Activated CD8-positive, alpha-beta memory T cell treated with anti-CD3 and anti-CD28 coated beads, Interleukin-2, amount 10 ng/mL, durations not matched to agents 7 days and 5 days (primary cell): ENCODE measurements at regions of chr12 and their contacts with region 1.

Region 1: GRCh38 chr12:751192-751998 is 984 bp upstream of the WNK1 start:
- DNase-seq: peak; percentile 97
- ATAC-seq: peak; percentile 61
- H3K4me3 Mint-ChIP-seq: no peak overlapping the region
- H3K27ac Mint-ChIP-seq: no peak overlapping the region
- H3K4me1 Mint-ChIP-seq: peaks cover 18% of the 10 kb centered on the region
- H3K27me3 Mint-ChIP-seq: no peaks in the 10 kb centered on the region

Region 2: GRCh38 chr12:575948-576612 is 175.3 kb before region 1 on chr12:
- CTCF ChIA-PET with region 1: interaction called, 99 read pairs
- DNase-seq: peak; percentile 85
- ATAC-seq: peak; percentile 94
- H3K4me3 Mint-ChIP-seq: no peak overlapping the region
- H3K27ac Mint-ChIP-seq: peak overlapping the region; percentile 70
- H3K4me1 Mint-ChIP-seq: peaks cover 43% of the 10 kb centered on the region
- H3K27me3 Mint-ChIP-seq: no peaks in the 10 kb centered on the region

Region 3: DNA sequence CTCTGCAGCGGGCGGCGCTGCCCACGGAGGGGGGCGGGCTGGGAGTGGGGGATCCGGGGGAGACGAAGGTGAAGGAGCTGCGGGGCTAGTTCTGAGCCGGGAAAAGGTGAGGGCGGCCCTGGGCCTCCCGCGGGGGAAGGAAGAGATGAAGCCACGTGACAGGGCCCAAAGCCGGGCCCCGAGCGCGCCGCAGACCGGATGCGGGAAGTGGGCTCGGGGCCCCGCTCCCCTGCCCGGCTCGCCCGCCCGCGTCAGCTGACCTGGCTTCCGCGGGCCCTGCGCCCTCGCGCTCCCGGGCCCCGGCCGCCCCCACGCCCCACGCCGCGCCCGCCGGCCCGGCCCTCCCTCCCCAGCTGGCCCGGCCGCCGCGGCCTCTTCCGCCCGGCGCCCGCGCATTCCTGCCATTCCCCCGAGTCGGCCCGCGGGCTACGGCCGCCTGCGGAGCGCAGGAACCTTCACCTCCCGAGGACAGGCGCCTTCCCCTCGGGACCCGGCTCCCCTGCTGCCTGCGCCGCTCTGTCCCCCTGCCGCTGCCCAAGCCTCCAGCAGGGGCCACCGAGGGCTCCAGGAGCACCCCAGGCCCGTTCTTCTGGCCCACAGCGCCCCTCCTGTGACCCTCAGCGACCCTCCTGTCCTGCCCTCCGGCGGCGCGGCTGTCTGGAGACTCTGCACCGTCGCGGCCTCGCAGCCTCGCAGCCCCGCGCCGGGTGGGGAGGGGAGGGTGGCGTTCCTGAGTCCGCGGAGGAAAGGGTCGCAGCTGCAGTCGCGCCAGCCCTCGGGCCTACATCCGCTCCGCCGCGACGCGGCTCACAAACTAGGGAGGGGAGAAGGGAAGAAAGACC is 108.5 kb before region 1 on chr12:
- CTCF ChIA-PET with region 1: interaction called, 44 read pairs
- DNase-seq: peak; percentile 86
- ATAC-seq: peak; percentile 85
- H3K4me3 Mint-ChIP-seq: peak overlapping the region; percentile 84
- H3K27ac Mint-ChIP-seq: peak overlapping the region; percentile 89
- H3K4me1 Mint-ChIP-seq: peaks cover 58% of the 10 kb centered on the region
- H3K27me3 Mint-ChIP-seq: no peaks in the 10 kb centered on the region

Region 4: GRCh38 chr12:674272-674781 is 77.1 kb before region 1 on chr12:
- CTCF ChIA-PET with region 1: interaction called, 61 read pairs
- DNase-seq: peak; percentile 90
- ATAC-seq: peak; percentile 92
- H3K4me3 Mint-ChIP-seq: peak overlapping the region; percentile 55
- H3K27ac Mint-ChIP-seq: peak overlapping the region; percentile 98
- H3K4me1 Mint-ChIP-seq: peaks cover 74% of the 10 kb centered on the region
- H3K27me3 Mint-ChIP-seq: no peaks in the 10 kb centered on the region

Region 5: GRCh38 chr12:724194-724855 is 27.1 kb before region 1 on chr12:
- CTCF ChIA-PET with region 1: interaction called, 30 read pairs
- DNase-seq: no peak
- ATAC-seq: peak; percentile 86
- H3K4me3 Mint-ChIP-seq: no peak overlapping the region
- H3K27ac Mint-ChIP-seq: peak overlapping the region; percentile 75
- H3K4me1 Mint-ChIP-seq: peaks cover 54% of the 10 kb centered on the region
- H3K27me3 Mint-ChIP-seq: no peaks in the 10 kb centered on the region

Region 6: DNA sequence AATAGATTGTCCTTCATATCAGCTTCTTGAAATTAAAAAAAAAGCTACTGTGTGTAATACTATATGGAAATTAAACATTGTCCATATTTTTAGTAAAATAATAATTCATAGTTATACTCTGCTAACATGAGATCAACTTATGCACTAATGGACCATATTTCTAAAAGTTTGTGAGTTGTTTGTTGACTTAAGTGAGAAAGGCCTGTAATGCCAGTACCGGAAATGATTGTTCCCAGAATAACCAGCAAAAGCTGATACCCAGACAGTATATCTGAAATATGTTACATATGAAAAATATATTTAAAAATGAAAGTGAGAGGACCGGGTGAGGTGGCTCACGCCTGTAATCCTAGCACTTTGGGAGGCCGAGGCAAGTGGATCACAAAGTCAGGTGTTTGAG is 36.9 kb after region 1 on chr12:
- CTCF ChIA-PET with region 1: no interaction called
- DNase-seq: no peak
- ATAC-seq: no peak
- H3K4me3 Mint-ChIP-seq: no peak overlapping the region
- H3K27ac Mint-ChIP-seq: no peak overlapping the region
- H3K4me1 Mint-ChIP-seq: peaks cover 50% of the 10 kb centered on the region
- H3K27me3 Mint-ChIP-seq: no peaks in the 10 kb centered on the region

Region 7: GRCh38 chr12:851913-852312 is 100.5 kb after region 1 on chr12:
- CTCF ChIA-PET with region 1: no interaction called
- DNase-seq: no peak
- ATAC-seq: no peak
- H3K4me3 Mint-ChIP-seq: no peak overlapping the region
- H3K27ac Mint-ChIP-seq: no peak overlapping the region
- H3K4me1 Mint-ChIP-seq: peaks cover 23% of the 10 kb centered on the region
- H3K27me3 Mint-ChIP-seq: no peaks in the 10 kb centered on the region

Region 8: DNA sequence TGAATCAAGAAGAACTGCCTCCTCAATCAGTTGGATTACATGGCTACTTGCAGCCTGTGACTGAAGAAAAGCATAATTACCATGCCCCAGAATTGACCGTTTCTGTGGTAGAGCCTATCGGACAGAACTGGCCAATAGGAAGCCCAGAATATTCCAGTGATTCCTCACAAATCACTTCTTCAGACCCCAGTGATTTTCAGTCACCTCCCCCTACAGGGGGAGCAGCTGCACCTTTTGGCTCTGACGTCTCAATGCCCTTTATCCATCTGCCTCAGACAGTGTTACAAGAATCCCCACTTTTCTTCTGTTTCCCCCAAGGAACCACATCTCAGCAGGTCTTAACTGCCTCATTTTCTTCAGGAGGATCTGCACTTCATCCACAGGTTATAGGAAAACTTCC is 117.3 kb after region 1 on chr12:
- CTCF ChIA-PET with region 1: no interaction called
- DNase-seq: no peak
- ATAC-seq: no peak
- H3K4me3 Mint-ChIP-seq: no peak overlapping the region
- H3K27ac Mint-ChIP-seq: no peak overlapping the region
- H3K4me1 Mint-ChIP-seq: peaks cover 6% of the 10 kb centered on the region
- H3K27me3 Mint-ChIP-seq: no peaks in the 10 kb centered on the region

Region 9: DNA sequence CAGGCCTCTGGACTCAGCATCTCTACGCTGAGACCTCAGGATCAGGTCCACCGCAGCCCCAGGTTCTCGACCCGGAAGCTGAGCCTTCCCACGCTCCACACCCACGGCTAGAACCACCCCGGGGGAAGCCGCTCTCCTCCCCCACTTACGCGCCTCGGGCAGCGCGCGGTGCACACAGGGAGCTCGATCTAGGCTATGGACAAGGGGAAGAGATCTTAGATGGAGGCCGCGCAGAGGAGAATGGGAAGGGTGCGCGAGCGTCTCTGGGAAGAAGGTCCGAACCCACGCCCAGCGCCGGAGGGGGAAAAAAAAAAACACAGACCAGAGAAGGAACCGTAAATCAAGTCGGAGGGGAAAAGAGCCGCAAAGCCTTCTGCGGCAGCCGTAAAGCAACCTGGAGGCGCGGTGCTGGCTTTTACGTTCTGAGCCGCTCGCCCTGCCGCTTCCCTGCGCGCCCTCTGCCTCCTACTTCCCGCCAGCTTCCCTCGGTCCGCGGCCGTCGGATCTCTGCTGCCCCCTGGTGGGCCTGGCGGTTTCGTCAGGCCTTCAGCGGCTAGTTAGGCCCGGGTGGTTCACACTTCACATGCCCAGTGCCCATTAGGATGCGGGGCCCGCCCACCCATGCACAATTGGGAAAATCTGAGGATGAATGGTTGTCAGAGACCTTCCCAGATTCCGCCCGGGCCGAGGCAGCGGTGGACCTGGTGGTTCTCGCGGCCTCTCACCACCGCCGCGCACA is 198.2 kb after region 1 on chr12 and contains the start of gene RAD52:
- CTCF ChIA-PET with region 1: interaction called, 10 read pairs
- DNase-seq: peak; percentile 98
- ATAC-seq: peak; percentile 84
- H3K4me3 Mint-ChIP-seq: peak within 1 kb of the TSS; percentile 98
- H3K27ac Mint-ChIP-seq: peak within 1 kb of the TSS; percentile 87
- H3K4me1 Mint-ChIP-seq: peaks cover 30% of the 10 kb centered on the region
- H3K27me3 Mint-ChIP-seq: no peaks in the 10 kb centered on the region
- total RNA-seq, gene RAD52: 14.6 to 21.8 TPM